ENCODE measurements at regions of chr19 and their contacts with region 1.

Region 1: DNA sequence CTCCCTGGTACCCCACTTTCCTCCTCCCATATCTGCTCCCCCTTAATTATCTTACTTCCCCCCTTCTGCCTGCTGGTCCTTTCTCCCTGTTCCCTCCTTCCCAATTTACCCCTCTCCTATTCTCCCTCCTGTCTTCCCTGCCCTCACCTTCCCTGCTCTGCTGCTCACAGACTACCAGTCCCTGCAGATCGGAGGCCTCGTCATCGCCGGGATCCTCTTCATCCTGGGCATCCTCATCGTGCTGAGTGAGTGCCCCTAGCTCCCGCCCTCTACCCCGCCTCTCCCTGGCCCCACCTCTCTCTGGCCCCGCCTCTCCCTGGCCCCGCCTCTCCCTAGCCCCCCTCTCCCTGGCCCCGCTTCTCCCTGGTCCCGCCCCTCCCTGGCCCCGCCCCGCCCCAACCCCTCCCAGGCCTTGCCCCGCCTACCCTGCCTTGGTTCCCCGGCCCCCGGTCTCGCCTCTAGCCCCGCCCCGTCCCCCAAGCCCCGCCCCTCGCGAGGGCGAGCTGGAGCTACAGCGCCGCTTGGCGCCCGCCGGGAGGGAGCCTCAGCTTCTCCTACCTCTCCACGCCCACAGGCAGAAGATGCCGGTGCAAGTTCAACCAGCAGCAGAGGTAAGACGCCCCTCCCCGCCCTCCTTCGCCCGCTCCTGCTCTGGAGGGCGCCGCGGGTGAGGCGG is 2.0 kb upstream of the FXYD7 start:
- DNase-seq: peak; percentile 99
- H3K4me3 ChIP-seq: peak overlapping the region; percentile 43 to 62 (median 51)
- H3K27ac ChIP-seq: peak overlapping the region; percentile 82 to 87 (median 85)
- H3K4me1 ChIP-seq: peaks cover 32 to 72% (median 61%) of the 10 kb centered on the region in 4 donors
- H3K27me3 ChIP-seq: peaks cover 0 to 66% (median 16%) of the 10 kb centered on the region in 4 donors
- CTCF ChIP-seq: peak; percentile 28 to 53 (median 42)
- EP300 ChIP-seq: no peak
- POLR2A ChIP-seq: peak; percentile 32

Region 2: GRCh38 chr19:35066691-35067563 is 74.2 kb before region 1 on chr19:
- intact Hi-C with region 1: loop called (anchors 5 kb)
- DNase-seq: peak; percentile 95
- H3K4me3 ChIP-seq: no peak overlapping the region
- H3K27ac ChIP-seq: no peak overlapping the region
- H3K4me1 ChIP-seq: peaks cover 0 to 4% (median 2%) of the 10 kb centered on the region in 4 donors
- H3K27me3 ChIP-seq: peaks cover 0 to 23% (median 0%) of the 10 kb centered on the region in 4 donors
- CTCF ChIP-seq: peak; percentile 69 to 82 (median 75)
- EP300 ChIP-seq: no peak
- POLR2A ChIP-seq: no peak

Region 3: DNA sequence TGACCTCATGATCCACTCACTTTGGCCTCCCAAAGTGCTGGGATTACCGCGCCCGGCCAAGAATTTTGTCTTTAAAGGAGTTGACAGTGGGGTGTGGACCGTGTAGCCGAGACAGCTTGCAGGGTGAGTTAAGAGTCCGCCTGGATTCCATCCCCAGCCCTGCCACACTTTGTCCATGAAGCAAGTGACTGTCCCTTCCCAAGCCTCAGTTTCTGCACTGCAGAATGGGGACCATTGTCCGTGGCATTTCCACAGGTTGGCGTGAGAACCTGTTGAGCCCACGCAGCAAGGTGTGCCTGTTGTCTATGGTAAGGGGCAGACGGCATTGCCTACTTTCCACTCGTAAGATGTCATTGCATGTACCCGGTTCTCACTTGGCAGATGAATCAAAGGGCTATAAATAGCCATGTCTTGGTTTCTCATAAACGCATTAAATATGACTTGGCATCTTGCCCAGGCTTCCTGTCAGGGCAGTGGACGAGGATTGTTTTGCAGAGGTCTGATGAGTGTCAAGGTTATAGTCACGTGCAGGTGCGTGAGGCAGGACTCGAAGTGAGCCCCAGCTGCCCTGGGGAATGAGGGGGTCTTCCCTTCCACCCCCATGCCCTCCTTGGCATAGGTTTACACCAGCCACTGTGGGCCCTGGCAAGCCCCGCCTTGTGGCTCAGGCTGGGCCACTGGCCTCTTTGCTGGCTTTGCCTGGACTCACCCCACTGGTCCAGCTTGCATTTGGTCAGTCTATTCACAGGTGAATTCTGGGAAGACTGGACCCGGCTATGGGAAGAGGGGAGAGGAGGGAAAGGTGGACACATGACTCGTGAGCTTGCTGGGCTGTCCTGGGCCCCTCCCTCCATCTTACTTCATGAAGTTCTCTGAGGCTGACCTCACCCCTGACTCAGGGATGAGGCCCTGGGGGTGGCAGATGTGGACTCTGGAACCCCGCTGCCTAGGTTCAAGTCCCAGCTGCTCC is 72.8 kb after region 1 on chr19:
- intact Hi-C with region 1: no loop called
- DNase-seq: no peak
- H3K4me3 ChIP-seq: no peak overlapping the region
- H3K27ac ChIP-seq: peak overlapping the region; percentile 70 to 76 (median 74)
- H3K4me1 ChIP-seq: peaks cover 22 to 31% (median 25%) of the 10 kb centered on the region in 4 donors
- H3K27me3 ChIP-seq: no peaks in the 10 kb centered on the region
- CTCF ChIP-seq: no peak
- EP300 ChIP-seq: no peak
- POLR2A ChIP-seq: no peak

Region 4: DNA sequence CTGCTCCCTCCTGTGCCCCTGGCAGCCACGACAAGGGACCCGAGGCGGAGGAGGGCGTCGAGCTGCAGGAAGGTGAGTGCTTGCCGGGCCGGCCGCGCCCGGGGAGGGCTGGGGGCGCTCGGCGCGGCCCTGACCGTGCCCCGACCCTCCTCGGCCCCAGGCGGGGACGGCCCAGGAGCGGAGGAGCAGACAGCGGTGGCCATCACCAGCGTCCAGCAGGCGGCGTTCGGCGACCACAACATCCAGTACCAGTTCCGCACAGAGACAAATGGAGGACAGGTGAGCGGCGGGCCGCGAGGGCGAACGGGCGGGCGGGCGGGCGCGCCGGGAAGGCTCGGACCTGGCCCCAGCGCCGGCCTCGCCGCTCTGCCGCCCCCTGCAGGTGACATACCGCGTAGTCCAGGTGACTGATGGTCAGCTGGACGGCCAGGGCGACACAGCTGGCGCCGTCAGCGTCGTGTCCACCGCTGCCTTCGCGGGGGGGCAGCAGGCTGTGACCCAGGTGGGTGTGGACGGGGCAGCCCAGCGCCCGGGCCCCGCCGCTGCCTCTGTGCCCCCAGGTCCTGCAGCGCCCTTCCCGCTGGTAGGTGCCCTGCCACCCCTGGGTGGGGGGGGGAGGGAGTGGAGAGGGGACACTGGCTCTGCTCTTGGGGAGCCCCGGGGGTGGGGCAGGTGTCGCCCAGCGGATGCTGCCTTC is 128.5 kb after region 1 on chr19:
- intact Hi-C with region 1: loop called (anchors 5 kb)
- DNase-seq: no peak
- H3K4me3 ChIP-seq: peak overlapping the region; percentile 76 to 95 (median 90)
- H3K27ac ChIP-seq: peak overlapping the region; percentile 94 to 97 (median 96)
- H3K4me1 ChIP-seq: peaks cover 30 to 48% (median 42%) of the 10 kb centered on the region in 4 donors
- H3K27me3 ChIP-seq: no peaks in the 10 kb centered on the region
- CTCF ChIP-seq: peak; percentile 52 to 80 (median 79)
- EP300 ChIP-seq: no peak
- POLR2A ChIP-seq: no peak